CD4-positive, alpha-beta T cell (primary cell): ENCODE measurements at regions of chrX and their contacts with region 1.

Region 1: GRCh38 chrX:135421537-135421931 is 210 bp upstream of the SMIM10L2A start:
- DNase-seq: peak; percentile 75 to 93 (median 86)
- ATAC-seq: peak; percentile 92
- H3K4me3 ChIP-seq: peak overlapping the region; percentile 40
- H3K4me3 Mint-ChIP-seq: peak overlapping the region; percentile 81
- H3K27ac ChIP-seq: no peak overlapping the region
- H3K27ac Mint-ChIP-seq: peak overlapping the region; percentile 51
- H3K4me1 ChIP-seq: peaks cover 11% of the 10 kb centered on the region
- H3K4me1 Mint-ChIP-seq: peaks cover 5% of the 10 kb centered on the region
- H3K27me3 ChIP-seq: no peaks in the 10 kb centered on the region
- H3K27me3 Mint-ChIP-seq: no peaks in the 10 kb centered on the region
- CTCF ChIP-seq: no peak

Region 2: GRCh38 chrX:135024526-135024925 is 397.0 kb before region 1 on chrX:
- CTCF ChIA-PET with region 1: no interaction called
- POLR2A ChIA-PET with region 1: no interaction called
- intact Hi-C with region 1: no loop called
- DNase-seq: no peak
- ATAC-seq: no peak
- H3K4me3 ChIP-seq: no peak overlapping the region
- H3K4me3 Mint-ChIP-seq: no peak overlapping the region
- H3K27ac ChIP-seq: no peak overlapping the region
- H3K27ac Mint-ChIP-seq: no peak overlapping the region
- H3K4me1 ChIP-seq: peaks cover 14% of the 10 kb centered on the region
- H3K4me1 Mint-ChIP-seq: peaks cover 18% of the 10 kb centered on the region
- H3K27me3 ChIP-seq: peaks cover 2 to 6% of the 10 kb centered on the region in 2 experiments
- H3K27me3 Mint-ChIP-seq: peaks cover 54% of the 10 kb centered on the region
- CTCF ChIP-seq: no peak

Region 3: GRCh38 chrX:135345107-135345589 is 76.4 kb before region 1 on chrX:
- CTCF ChIA-PET with region 1: no interaction called
- POLR2A ChIA-PET with region 1: interaction called, 5 read pairs
- intact Hi-C with region 1: loop called in 1 of 2 experiments (anchors 2 kb)
- DNase-seq: peak in 1 of 14 experiments; percentile 1
- ATAC-seq: no peak
- H3K4me3 ChIP-seq: peak overlapping the region; percentile 91
- H3K4me3 Mint-ChIP-seq: peak overlapping the region; percentile 79
- H3K27ac ChIP-seq: no peak overlapping the region
- H3K27ac Mint-ChIP-seq: peak overlapping the region; percentile 59
- H3K4me1 ChIP-seq: peaks cover 37% of the 10 kb centered on the region
- H3K4me1 Mint-ChIP-seq: peaks cover 60% of the 10 kb centered on the region
- H3K27me3 ChIP-seq: no peaks in the 10 kb centered on the region
- H3K27me3 Mint-ChIP-seq: no peaks in the 10 kb centered on the region
- CTCF ChIP-seq: no peak

Region 4: DNA sequence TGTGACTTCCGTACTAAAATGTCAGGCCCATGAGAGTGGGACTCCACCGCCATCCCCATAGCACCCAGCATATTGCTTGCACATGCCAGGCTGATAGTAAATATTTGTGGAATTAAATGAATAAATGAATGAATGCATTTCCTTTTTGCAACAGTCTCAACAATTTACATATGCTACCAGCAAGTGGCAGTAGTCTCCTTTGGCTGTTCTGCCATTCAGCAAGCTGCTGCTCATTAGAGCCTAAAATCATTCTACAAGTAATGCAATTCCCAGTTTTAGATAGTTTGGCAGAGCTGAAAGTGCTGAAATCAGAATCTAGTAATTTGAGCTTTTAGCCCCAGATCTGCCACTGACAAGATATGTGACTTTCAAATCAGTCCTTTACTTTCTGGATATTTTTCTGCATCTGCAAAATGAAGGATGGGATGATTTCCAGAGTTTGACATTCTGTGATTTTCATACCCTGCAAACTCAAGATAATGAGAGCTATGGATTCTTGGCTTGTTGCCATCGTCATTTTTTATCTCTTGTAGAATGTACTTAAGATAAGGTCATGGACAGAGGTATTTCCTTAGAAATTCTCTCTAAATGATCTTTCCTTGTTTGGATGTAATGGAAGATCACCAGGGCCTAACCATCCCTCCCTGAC is 63.2 kb after region 1 on chrX:
- CTCF ChIA-PET with region 1: no interaction called
- POLR2A ChIA-PET with region 1: no interaction called
- intact Hi-C with region 1: no loop called
- DNase-seq: peak in 7 of 14 experiments; percentile 0 to 72 (median 25)
- ATAC-seq: peak; percentile 49
- H3K4me3 ChIP-seq: no peak overlapping the region
- H3K4me3 Mint-ChIP-seq: no peak overlapping the region
- H3K27ac ChIP-seq: no peak overlapping the region
- H3K27ac Mint-ChIP-seq: no peak overlapping the region
- H3K4me1 ChIP-seq: no peaks in the 10 kb centered on the region
- H3K4me1 Mint-ChIP-seq: no peaks in the 10 kb centered on the region
- H3K27me3 ChIP-seq: no peaks in the 10 kb centered on the region
- H3K27me3 Mint-ChIP-seq: peaks cover 5% of the 10 kb centered on the region
- CTCF ChIP-seq: peak; percentile 69

Region 5: GRCh38 chrX:135516376-135516775 is 94.8 kb after region 1 on chrX:
- CTCF ChIA-PET with region 1: no interaction called
- POLR2A ChIA-PET with region 1: no interaction called
- intact Hi-C with region 1: loop called in 1 of 2 experiments (anchors 5 kb)
- DNase-seq: peak in 1 of 14 experiments; percentile 18
- ATAC-seq: no peak
- H3K4me3 ChIP-seq: no peak overlapping the region
- H3K4me3 Mint-ChIP-seq: no peak overlapping the region
- H3K27ac ChIP-seq: no peak overlapping the region
- H3K27ac Mint-ChIP-seq: no peak overlapping the region
- H3K4me1 ChIP-seq: peaks cover 7% of the 10 kb centered on the region
- H3K4me1 Mint-ChIP-seq: peaks cover 7% of the 10 kb centered on the region
- H3K27me3 ChIP-seq: no peaks in the 10 kb centered on the region
- H3K27me3 Mint-ChIP-seq: no peaks in the 10 kb centered on the region
- CTCF ChIP-seq: no peak

Region 6: GRCh38 chrX:135973548-135974278 is 552.2 kb after region 1 on chrX and contains the start of gene MMGT1:
- CTCF ChIA-PET with region 1: no interaction called
- POLR2A ChIA-PET with region 1: no interaction called
- intact Hi-C with region 1: loop called in 1 of 2 experiments (anchors 5 kb)
- DNase-seq: peak; percentile 63 to 92 (median 76)
- ATAC-seq: peak; percentile 84
- H3K4me3 ChIP-seq: peak within 1 kb of the TSS; percentile 92
- H3K4me3 Mint-ChIP-seq: peak within 1 kb of the TSS; percentile 95
- H3K27ac ChIP-seq: peak within 1 kb of the TSS; percentile 79 to 89
- H3K27ac Mint-ChIP-seq: peak within 1 kb of the TSS; percentile 97
- H3K4me1 ChIP-seq: peaks cover 13% of the 10 kb centered on the region
- H3K4me1 Mint-ChIP-seq: peaks cover 48% of the 10 kb centered on the region
- H3K27me3 ChIP-seq: no peaks in the 10 kb centered on the region
- H3K27me3 Mint-ChIP-seq: no peaks in the 10 kb centered on the region
- CTCF ChIP-seq: no peak
- total RNA-seq, gene MMGT1: 36.4 to 37.0 TPM